Right lobe of liver (tissue), 6 donors: ENCODE measurements at regions of chr20 and their contacts with region 1.

Region 1: GRCh38 chr20:37990571-37991151 is 42.6 kb downstream of the TTI1 start:
- DNase-seq: peak in 2 of 3 donors; percentile 56 to 65
- ATAC-seq: peak; percentile 1 to 50 (median 25)
- H3K4me3 ChIP-seq: no peak overlapping the region
- H3K27ac ChIP-seq: peak overlapping the region in 2 of 3 donors; percentile 9
- H3K4me1 ChIP-seq: peaks cover 0 to 51% (median 21%) of the 10 kb centered on the region in 4 donors
- H3K27me3 ChIP-seq: no peaks in the 10 kb centered on the region
- CTCF ChIP-seq: no peak
- POLR2A ChIP-seq: no peak

Region 2: DNA sequence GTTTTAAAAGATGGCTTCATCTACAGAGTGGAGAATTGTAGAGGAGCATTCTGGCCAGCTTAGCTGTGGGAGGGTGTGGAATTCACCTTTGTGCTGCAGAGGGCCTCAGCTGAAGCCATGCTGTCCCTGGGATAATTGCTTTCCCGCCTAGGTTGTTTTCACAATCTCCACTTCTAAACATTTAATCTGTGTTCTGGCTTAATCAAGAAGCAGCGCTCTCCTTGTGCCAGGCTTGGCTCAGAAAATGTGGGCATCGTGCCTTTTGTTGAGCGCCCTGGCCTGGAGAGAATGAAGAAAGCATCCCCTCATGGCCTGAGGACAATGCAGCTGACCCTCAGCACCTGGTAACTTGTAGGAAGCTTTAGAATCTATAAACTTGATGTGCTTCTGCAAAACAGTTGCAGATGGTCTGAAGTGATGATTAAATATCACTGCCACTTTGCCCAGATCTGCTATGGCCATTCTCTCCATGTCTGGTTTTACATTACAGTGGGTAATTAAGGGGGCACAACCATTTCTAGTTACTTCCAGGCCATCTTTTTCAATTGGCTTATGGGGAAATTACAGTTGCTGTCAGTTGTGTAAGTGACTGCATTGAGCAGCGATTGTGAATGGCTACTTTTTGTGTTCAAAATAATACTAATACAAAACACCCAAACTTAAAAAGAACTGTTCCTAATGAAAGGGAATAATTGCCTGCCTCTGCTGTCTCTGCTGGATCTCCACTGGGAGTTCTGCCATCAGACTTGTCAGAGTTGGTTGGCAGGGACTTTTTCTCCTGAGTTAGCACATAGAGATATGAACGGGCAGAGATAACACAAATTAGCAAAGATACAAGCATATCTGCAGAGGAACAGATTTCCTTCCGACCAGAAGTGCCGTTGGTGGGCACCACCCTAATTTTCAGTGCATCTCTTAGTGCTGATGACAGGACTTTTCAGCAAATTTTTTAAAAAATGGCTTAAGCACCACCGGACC is 278.4 kb before region 1 on chr20:
- intact Hi-C with region 1: no loop called
- DNase-seq: peak in 1 of 3 donors; percentile 60
- ATAC-seq: peak; percentile 68 to 79 (median 75)
- H3K4me3 ChIP-seq: no peak overlapping the region
- H3K27ac ChIP-seq: peak overlapping the region in 1 of 3 donors; percentile 33
- H3K4me1 ChIP-seq: peaks cover 0 to 47% (median 15%) of the 10 kb centered on the region in 4 donors
- H3K27me3 ChIP-seq: no peaks in the 10 kb centered on the region
- CTCF ChIP-seq: peak in 1 of 4 donors; percentile 5
- POLR2A ChIP-seq: no peak

Region 3: DNA sequence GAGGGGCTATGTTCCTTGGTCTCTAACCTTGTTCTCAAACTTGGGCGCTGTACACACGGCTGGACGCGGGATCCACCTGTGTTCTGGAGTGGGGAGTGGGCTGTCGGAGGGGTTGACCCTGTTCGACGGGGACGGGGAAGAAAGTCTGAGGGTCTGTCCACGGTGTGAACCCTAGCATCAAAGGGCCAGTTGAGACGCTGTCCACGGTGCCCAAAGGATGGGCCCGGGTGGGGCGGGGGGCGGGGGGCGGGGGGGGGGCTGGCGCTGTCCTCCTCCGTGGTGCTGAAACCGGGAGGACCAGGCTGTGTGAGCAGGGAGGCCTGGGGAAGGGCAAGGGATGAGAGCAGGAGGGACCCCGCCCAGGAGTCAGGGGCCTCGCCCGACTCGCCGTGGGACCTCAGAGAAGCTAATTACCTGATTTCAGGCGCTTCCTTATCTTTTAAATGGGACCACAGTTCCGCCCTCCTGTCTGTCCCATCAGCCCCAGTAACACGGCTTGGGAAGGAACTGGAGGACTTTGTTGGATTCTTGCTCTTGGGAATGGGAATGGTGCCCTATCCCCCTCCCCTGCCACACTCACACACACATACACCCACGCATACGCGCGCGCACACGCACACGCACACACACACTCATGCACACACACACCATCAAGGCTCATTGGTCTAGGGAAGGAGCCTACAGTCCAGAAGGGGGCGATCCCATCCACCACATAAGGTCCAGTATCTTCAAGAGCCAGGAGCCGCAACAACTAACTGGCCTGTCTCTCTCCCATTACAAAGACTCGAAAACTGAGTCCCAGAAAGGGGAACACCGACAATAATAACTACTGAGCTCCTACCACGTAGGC is 88.8 kb before region 1 on chr20:
- intact Hi-C with region 1: loop called in 1 of 2 experiments (anchors 10 kb)
- DNase-seq: peak in 2 of 3 donors; percentile 47 to 68
- ATAC-seq: peak; percentile 85 to 91 (median 88)
- H3K4me3 ChIP-seq: peak overlapping the region; percentile 33 to 54 (median 42)
- H3K27ac ChIP-seq: no peak overlapping the region
- H3K4me1 ChIP-seq: peaks cover 0 to 10% (median 0%) of the 10 kb centered on the region in 4 donors
- H3K27me3 ChIP-seq: no peaks in the 10 kb centered on the region
- CTCF ChIP-seq: peak; percentile 38 to 56 (median 54)
- POLR2A ChIP-seq: no peak